ENCODE measurements at regions of chr12 and their contacts with region 1.

Region 1: GRCh38 chr12:54005853-54006686 is 2.7 kb upstream of the HOXC8 start:
- DNase-seq: peak; percentile 91
- ATAC-seq: peak; percentile 81
- H3K4me3 Mint-ChIP-seq: peak overlapping the region; percentile 46
- H3K27ac Mint-ChIP-seq: no peak overlapping the region
- H3K4me1 Mint-ChIP-seq: peaks cover 29% of the 10 kb centered on the region
- H3K27me3 Mint-ChIP-seq: peaks cover 87% of the 10 kb centered on the region

Region 2: GRCh38 chr12:54017878-54018467 is 11.9 kb after region 1 on chr12:
- CTCF ChIA-PET with region 1: interaction called, 13 read pairs
- POLR2A ChIA-PET with region 1: no interaction called
- intact Hi-C with region 1: loop called in 1 of 2 experiments (anchors 2 kb)
- DNase-seq: peak; percentile 85
- ATAC-seq: peak; percentile 88
- H3K4me3 Mint-ChIP-seq: peak overlapping the region; percentile 65
- H3K27ac Mint-ChIP-seq: no peak overlapping the region
- H3K4me1 Mint-ChIP-seq: peaks cover 17% of the 10 kb centered on the region
- H3K27me3 Mint-ChIP-seq: peaks cover 58% of the 10 kb centered on the region

Region 3: GRCh38 chr12:54047160-54047963 is 41.3 kb after region 1 on chr12:
- CTCF ChIA-PET with region 1: no interaction called
- POLR2A ChIA-PET with region 1: no interaction called
- intact Hi-C with region 1: loop called (anchors 2 to 5 kb)
- DNase-seq: no peak
- ATAC-seq: no peak
- H3K4me3 Mint-ChIP-seq: no peak overlapping the region
- H3K27ac Mint-ChIP-seq: no peak overlapping the region
- H3K4me1 Mint-ChIP-seq: peaks cover 15% of the 10 kb centered on the region
- H3K27me3 Mint-ChIP-seq: peaks cover 72% of the 10 kb centered on the region

Region 4: DNA sequence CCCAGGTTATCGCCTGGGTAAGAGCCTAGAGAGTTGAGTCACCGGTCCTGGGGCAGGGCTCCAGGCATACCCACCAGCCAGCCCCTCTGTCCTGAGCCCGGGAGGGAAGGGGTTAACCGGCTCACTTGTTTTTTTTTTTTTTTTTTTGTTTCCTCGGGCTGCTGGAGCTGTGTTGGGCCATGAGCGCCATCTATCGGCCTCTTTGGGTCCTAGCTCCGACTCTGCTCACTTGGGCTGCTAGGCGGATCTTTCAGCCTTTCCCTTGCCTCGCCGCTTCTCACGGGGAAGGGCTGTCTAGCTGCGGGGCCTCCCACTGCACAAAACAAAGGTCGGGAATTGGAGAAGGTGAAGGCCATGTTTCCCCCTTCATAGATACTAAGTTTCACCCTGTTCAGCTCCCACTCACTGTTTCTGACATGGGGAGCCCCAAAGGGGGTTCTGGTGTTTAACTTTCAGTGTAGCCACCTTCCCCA is 185.5 kb after region 1 on chr12:
- CTCF ChIA-PET with region 1: interaction called, 32 read pairs
- POLR2A ChIA-PET with region 1: no interaction called
- intact Hi-C with region 1: loop called (anchors 1 kb)
- DNase-seq: peak; percentile 87
- ATAC-seq: peak; percentile 60
- H3K4me3 Mint-ChIP-seq: no peak overlapping the region
- H3K27ac Mint-ChIP-seq: no peak overlapping the region
- H3K4me1 Mint-ChIP-seq: peaks cover 17% of the 10 kb centered on the region
- H3K27me3 Mint-ChIP-seq: peaks cover 35% of the 10 kb centered on the region

Region 5: DNA sequence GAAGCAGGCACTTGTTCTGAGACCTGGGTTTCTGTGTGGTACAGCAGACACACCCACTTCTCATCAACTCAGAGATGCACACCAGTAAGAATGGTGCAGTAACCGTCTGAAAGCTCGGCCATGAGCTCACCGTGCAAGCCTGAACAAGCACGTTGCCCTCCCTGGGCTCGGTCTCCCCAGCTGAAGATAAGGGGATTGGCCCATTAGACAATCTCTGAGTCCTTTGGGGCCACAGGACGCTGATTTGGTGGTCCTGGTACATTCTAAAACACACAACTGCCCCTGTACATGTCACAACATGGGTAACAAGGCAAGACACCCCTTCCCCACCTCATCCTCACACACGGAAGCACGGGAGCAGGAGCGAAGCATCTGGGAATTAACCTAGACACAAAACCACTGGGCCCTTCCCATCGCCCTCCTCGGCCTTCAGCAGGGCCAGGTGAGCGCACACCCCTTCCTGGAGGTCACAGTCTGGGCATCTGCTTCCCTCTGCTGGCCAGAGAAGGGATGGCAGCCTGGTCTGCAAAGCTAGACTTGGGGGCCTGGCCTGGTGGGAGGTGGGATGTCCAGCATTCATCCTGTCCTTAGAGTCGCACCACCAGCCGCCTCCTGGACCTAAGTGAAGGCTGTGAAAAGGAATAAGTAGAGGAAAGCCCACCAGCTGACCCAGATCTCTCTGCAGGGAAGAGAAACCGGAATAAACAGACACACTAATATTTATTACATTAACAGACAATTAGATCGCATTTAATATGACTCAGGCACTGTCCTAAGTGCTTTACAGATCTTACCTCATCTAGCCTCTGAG is 201.6 kb after region 1 on chr12:
- CTCF ChIA-PET with region 1: interaction called, 71 read pairs
- POLR2A ChIA-PET with region 1: no interaction called
- intact Hi-C with region 1: loop called (anchors 1 kb)
- DNase-seq: peak; percentile 88
- ATAC-seq: peak; percentile 93
- H3K4me3 Mint-ChIP-seq: no peak overlapping the region
- H3K27ac Mint-ChIP-seq: no peak overlapping the region
- H3K4me1 Mint-ChIP-seq: no peaks in the 10 kb centered on the region
- H3K27me3 Mint-ChIP-seq: peaks cover 25% of the 10 kb centered on the region